Activated CD4-positive, alpha-beta memory T cell treated with anti-CD3 and anti-CD28 coated beads for 36 hours (primary cell): ENCODE measurements at regions of chr16 and their contacts with region 1.

Region 1: GRCh38 chr16:23504451-23505179 is 5.7 kb downstream of the GGA2 start:
- DNase-seq: peak; percentile 94
- H3K4me3 Mint-ChIP-seq: peak overlapping the region; percentile 65
- H3K27ac Mint-ChIP-seq: peak overlapping the region; percentile 87
- H3K4me1 Mint-ChIP-seq: peaks cover 80% of the 10 kb centered on the region
- H3K27me3 Mint-ChIP-seq: no peaks in the 10 kb centered on the region

Region 2: GRCh38 chr16:23452572-23453337 is 51.9 kb before region 1 on chr16 and contains the start of gene COG7:
- CTCF ChIA-PET with region 1: interaction called, 4 read pairs
- POLR2A ChIA-PET with region 1: interaction called, 5 read pairs
- intact Hi-C with region 1: loop called (anchors 2 kb)
- DNase-seq: peak; percentile 91
- H3K4me3 Mint-ChIP-seq: peak within 1 kb of the TSS; percentile 91
- H3K27ac Mint-ChIP-seq: peak within 1 kb of the TSS; percentile 52
- H3K4me1 Mint-ChIP-seq: peaks cover 25% of the 10 kb centered on the region
- H3K27me3 Mint-ChIP-seq: no peaks in the 10 kb centered on the region
- total RNA-seq, gene COG7: 17.0 to 18.1 TPM

Region 3: GRCh38 chr16:23527961-23528643 is 23.5 kb after region 1 on chr16:
- CTCF ChIA-PET with region 1: no interaction called
- POLR2A ChIA-PET with region 1: no interaction called
- intact Hi-C with region 1: no loop called
- DNase-seq: no peak
- H3K4me3 Mint-ChIP-seq: no peak overlapping the region
- H3K27ac Mint-ChIP-seq: no peak overlapping the region
- H3K4me1 Mint-ChIP-seq: no peaks in the 10 kb centered on the region
- H3K27me3 Mint-ChIP-seq: no peaks in the 10 kb centered on the region

Region 4: DNA sequence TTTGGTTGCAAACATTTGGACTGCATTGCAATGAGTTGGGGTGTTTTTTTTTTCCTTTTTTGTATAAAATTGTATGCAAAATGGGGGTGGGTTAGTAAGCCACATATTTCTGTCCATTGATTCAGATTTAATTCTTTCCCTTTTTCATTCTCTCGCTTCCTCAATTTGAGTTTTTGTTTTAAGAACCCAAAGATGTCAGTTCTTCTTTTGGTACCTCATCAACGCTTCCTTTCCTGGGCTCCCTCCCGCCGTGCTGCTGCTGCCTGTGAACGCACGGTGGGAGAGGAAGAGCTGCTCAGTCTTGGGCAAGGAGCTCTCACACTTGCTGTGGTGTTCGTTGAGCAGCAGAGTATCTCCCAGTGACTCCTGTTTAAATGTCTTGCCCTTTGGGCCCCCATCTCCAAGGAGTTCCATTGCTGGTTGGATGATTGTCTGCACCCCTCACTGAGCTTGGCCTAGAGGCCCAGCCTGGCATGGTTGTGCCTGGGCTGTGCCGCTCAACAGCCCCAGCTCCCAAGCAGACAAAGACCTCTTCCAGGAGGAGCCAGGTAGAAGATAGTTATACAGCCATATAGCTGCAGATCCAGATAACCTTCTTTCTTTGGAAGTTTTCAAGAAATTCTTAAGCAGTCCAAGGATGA is 66.5 kb after region 1 on chr16:
- CTCF ChIA-PET with region 1: no interaction called
- POLR2A ChIA-PET with region 1: no interaction called
- intact Hi-C with region 1: no loop called
- DNase-seq: no peak
- H3K4me3 Mint-ChIP-seq: no peak overlapping the region
- H3K27ac Mint-ChIP-seq: no peak overlapping the region
- H3K4me1 Mint-ChIP-seq: peaks cover 2% of the 10 kb centered on the region
- H3K27me3 Mint-ChIP-seq: no peaks in the 10 kb centered on the region

Region 5: GRCh38 chr16:23595951-23596720 is 91.5 kb after region 1 on chr16 and contains the start of gene NDUFAB1:
- CTCF ChIA-PET with region 1: interaction called, 3 read pairs
- POLR2A ChIA-PET with region 1: no interaction called
- intact Hi-C with region 1: loop called (anchors 5 kb)
- DNase-seq: peak; percentile 94
- H3K4me3 Mint-ChIP-seq: peak within 1 kb of the TSS; percentile 81
- H3K27ac Mint-ChIP-seq: peak within 1 kb of the TSS; percentile 85
- H3K4me1 Mint-ChIP-seq: peaks cover 35% of the 10 kb centered on the region
- H3K27me3 Mint-ChIP-seq: no peaks in the 10 kb centered on the region
- total RNA-seq, gene NDUFAB1: 152 to 153 TPM

Region 6: GRCh38 chr16:23640931-23641765 is 136.5 kb after region 1 on chr16 and contains the starts of genes DCTN5 and PALB2:
- CTCF ChIA-PET with region 1: no interaction called
- POLR2A ChIA-PET with region 1: no interaction called
- intact Hi-C with region 1: loop called (anchors 10 kb)
- DNase-seq: peak; percentile 94
- H3K4me3 Mint-ChIP-seq: peak within 1 kb of the TSS; percentile 99
- H3K27ac Mint-ChIP-seq: peak within 1 kb of the TSS; percentile 94
- H3K4me1 Mint-ChIP-seq: peaks cover 27% of the 10 kb centered on the region
- H3K27me3 Mint-ChIP-seq: no peaks in the 10 kb centered on the region
- total RNA-seq, gene DCTN5: 55.6 to 56.1 TPM
- total RNA-seq, gene PALB2: 20.3 to 20.8 TPM

Region 7: GRCh38 chr16:23678430-23679273 is 174.0 kb after region 1 on chr16 and contains the start of gene PLK1:
- CTCF ChIA-PET with region 1: no interaction called
- POLR2A ChIA-PET with region 1: no interaction called
- intact Hi-C with region 1: loop called (anchors 10 kb)
- DNase-seq: peak; percentile 92
- H3K4me3 Mint-ChIP-seq: peak within 1 kb of the TSS; percentile 92
- H3K27ac Mint-ChIP-seq: peak within 1 kb of the TSS; percentile 33
- H3K4me1 Mint-ChIP-seq: peaks cover 13% of the 10 kb centered on the region
- H3K27me3 Mint-ChIP-seq: no peaks in the 10 kb centered on the region
- total RNA-seq, gene PLK1: 81.2 to 81.6 TPM

Region 8: GRCh38 chr16:23863511-23864422 is 359.2 kb after region 1 on chr16:
- CTCF ChIA-PET with region 1: no interaction called
- POLR2A ChIA-PET with region 1: no interaction called
- intact Hi-C with region 1: no loop called
- DNase-seq: peak; percentile 44
- H3K4me3 Mint-ChIP-seq: peak overlapping the region; percentile 72
- H3K27ac Mint-ChIP-seq: peak overlapping the region; percentile 80
- H3K4me1 Mint-ChIP-seq: peaks cover 69% of the 10 kb centered on the region
- H3K27me3 Mint-ChIP-seq: no peaks in the 10 kb centered on the region